Adrenal gland (tissue), 19 donors: ENCODE measurements at regions of chr21 and their contacts with region 1.

Region 1: GRCh38 chr21:32653311-32653901 is 41.2 kb upstream of the CFAP298 start:
- DNase-seq: peak in 1 of 7 donors; percentile 7
- H3K4me3 ChIP-seq: no peak overlapping the region
- H3K27ac ChIP-seq: no peak overlapping the region
- H3K4me1 ChIP-seq: no peaks in the 10 kb centered on the region
- H3K27me3 ChIP-seq: no peaks in the 10 kb centered on the region
- CTCF ChIP-seq: peak; percentile 23 to 55 (median 48)
- POLR2A ChIP-seq: no peak

Region 2: DNA sequence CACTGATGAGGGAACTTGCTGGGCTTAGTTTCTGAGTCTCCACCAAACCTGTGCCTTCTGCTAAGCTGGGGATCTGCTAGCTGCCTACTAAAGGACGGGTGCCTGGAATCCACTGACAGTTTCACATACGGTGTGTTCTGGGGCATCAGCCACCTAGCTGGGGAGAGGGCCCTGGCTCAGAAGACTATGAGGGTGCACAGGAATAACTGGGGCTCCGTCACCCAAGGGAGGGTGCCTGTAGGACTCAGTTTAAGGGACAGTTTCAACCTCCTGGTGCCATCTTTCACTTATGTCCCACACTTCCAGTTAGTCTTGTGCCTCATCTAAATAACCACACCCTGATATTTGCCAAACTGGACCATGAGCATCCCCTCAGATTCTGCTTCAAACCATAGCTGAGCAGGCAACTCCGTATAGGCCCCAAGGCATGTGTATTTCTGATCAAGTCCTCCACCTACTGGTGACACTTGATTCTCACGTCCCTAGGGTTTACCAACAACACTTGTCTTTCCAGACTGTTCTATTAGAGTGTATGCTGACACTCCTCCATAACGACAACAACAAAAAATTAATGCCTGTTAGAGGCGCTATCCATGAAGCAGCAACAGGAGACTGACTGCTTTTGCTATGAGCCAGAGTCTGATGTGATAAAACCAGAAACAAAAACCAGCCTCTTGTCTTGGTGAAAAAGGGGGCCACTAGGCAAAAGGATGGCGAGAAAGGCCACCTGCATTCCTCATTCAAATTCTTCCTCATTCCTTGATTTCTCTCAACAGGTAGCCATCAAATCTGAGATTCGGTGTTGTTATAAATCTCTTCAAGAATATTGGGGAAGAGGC is 173.1 kb after region 1 on chr21:
- intact Hi-C with region 1: loop called in 1 of 2 experiments (anchors 10 kb)
- DNase-seq: peak; percentile 41 to 70 (median 47)
- H3K4me3 ChIP-seq: no peak overlapping the region
- H3K27ac ChIP-seq: no peak overlapping the region
- H3K4me1 ChIP-seq: no peaks in the 10 kb centered on the region
- H3K27me3 ChIP-seq: no peaks in the 10 kb centered on the region
- CTCF ChIP-seq: peak; percentile 46 to 63 (median 59)
- POLR2A ChIP-seq: no peak